Left colon (tissue), 2 donors: ENCODE measurements at regions of chr1 and their contacts with region 1.

Region 1: DNA sequence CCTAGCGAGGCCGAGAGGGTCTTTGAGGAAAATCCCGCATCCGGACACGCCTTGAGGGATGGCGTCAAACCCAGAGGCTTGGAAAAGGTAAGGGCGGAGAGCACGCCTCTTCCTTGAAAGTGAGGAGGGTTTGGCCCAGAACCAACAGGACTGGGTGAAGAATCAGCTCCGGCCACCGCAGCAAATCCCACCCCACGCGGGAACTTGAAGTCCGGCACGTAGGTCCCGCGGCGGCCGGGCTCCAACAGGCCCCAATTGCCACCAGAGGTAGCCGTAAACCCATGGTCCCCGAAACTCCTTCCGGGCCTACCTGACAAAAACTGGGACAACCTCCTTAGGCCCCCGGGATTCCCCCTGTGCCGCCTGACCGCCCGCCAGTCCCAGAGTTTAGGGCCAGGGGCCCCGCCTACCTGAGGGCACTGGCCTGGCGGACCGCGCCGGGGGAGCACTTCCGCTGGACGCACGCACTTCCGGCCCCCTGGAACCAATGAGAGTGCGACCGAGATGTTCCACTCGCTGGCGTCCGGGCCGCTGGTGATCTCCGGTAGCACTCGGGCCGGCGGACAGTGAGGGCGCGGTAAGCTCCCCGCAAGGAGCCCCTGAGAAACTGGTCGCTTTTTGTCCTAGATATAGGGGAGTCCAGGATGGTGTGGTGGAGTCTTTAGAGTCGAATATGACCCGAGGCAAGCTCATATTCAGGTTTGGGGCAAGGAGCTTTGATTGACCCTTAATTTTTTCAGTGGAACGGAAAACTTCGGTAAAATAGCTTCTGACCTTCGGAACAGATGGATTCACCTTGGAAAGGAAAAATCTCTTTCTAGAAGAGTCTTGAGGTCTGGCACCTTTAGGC is at the starts of genes LZIC and NMNAT1:
- DNase-seq: peak; percentile 92 to 95
- ATAC-seq: peak; percentile 96
- total RNA-seq, gene LZIC: 45.9 to 49.6 TPM
- total RNA-seq, gene NMNAT1: 23.3 to 25.5 TPM

Region 2: DNA sequence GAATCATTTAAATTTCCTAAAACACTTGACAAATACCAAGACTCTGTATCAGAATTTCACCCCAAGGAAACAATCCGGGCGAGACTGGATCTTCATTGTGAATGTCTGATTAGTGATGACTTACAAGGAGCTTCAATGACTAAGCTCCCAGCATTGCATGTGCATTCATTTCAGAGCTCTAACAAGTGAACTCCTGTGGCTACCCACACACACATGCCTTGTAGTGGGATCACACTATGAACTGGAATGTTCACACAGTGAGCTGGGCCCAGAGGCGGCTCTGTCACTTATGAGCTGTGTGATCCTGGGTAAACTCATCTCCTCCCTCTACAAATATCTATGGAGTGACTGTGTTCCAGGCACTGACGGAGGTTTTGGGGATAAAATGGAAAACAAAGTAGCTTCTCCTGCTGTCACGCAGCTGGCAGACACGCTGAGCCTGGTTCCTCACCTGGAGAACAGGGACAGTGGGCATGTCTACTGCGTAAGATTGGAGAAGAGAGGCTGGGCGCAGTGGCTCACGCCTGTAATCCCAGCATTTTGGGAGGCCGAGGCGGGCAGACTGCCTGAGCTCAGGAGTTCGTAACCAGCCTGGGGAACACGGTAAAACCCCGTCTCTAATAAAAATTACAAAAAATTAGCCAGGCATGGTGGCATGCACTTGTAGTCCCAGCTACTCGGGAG is 176.3 kb before region 1 on chr1:
- intact Hi-C with region 1: no loop called
- DNase-seq: no peak
- ATAC-seq: no peak

Region 3: DNA sequence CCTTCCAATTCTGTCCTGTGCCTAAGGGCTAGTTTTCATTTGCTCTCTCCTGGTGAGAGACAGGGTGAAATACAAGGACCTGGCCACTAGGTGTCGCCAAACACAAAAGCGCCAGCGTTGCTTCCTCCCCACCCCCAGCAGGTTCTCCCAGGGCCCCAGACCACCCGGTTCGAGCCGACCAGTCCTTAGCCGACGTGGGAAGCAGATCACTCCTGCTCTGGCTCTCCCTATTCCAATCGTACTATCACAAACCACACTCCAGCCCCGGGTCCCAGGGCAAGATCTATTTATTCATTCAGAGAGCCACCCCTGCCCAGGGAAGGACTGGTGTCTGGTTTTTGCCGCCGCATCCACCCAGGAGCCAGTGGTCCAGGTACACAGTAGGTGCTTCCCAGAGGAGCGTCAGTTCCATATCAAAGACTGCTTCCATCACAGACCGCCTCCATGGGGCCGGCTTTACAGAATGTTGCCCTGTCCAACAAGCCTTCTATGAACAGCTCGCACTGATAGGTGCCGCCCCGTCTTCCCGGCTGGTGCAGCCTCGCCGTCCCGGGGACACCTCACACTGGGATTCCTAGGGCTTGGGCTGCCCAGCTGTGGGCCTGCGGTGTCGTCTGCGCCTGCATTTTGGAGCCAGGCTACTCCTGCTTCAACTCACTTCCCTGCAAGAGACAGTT is 68.1 kb before region 1 on chr1:
- intact Hi-C with region 1: loop called in 1 of 2 experiments (anchors 5 kb)
- DNase-seq: peak; percentile 46 to 69
- ATAC-seq: peak; percentile 63